Mammary epithelial cell (primary cell): ENCODE measurements at regions of chr14 and their contacts with region 1.

Region 1: DNA sequence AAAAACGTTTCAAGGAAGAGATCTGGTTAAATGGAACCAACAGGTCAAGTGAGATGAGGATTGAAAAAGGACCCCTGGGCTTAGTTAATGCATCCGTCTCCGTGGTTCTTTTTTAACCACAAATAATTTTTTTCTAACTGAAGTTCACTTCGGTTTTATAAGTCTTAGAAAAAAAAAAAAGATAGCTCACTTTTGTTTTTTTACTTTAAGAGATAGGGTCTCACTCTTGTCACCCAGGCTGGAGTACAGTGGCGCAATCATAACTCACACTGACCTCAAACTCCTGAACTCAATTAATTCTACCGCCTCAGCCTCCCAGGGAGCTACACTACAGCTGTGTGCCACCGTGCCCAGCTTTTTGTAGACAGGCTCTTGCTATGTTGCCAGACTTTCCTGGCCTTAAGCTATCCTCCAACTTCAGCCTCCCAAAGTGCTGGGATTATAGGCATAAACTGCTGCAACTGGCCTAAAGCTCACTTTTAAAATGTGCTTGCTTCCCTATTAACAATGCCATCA is 11.8 kb downstream of the HNRNPC start:
- DNase-seq: no peak
- H3K4me3 ChIP-seq: no peak overlapping the region
- H3K27ac ChIP-seq: no peak overlapping the region
- H3K4me1 ChIP-seq: peaks cover 20% of the 10 kb centered on the region
- H3K27me3 ChIP-seq: no peaks in the 10 kb centered on the region
- CTCF ChIP-seq: no peak

Region 2: DNA sequence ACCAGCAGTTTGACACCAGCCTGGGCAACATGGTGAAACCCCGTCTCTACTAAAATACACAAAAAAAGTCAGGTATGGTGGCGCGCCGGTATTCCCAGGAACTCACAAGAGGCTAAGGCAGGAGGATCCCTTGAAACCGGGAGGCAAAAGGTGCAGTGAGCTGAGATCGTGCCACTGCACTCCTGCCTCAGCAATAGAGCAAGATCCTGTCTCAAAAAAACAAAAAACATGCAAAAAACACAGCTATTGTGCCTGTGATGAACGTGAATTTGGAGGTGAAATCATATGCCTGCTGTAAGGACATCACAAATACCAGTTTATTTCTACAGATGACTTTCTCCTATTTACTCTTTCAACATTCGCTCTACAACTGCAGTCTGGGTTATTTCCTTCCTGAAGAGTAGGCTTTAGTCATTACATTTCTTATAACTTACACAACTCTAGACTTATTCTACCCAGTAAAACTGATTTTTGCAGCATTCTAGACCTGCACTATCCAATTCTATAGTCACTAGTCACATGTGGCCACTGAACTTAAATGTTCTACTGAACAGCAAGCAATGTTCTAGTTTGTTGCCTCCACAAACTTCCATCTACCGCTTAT is 36.5 kb before region 1 on chr14:
- CTCF ChIA-PET with region 1: no interaction called
- dilution Hi-C with region 1: no loop called
- in situ Hi-C with region 1: no loop called
- intact Hi-C with region 1: loop called (anchors 5 kb)
- DNase-seq: no peak
- H3K4me3 ChIP-seq: no peak overlapping the region
- H3K27ac ChIP-seq: no peak overlapping the region
- H3K4me1 ChIP-seq: peaks cover 23% of the 10 kb centered on the region
- H3K27me3 ChIP-seq: no peaks in the 10 kb centered on the region
- CTCF ChIP-seq: no peak

Region 3: GRCh38 chr14:21269252-21270046 is 12.0 kb after region 1 on chr14 and contains the start of gene HNRNPC:
- CTCF ChIA-PET with region 1: no interaction called
- dilution Hi-C with region 1: no loop called
- in situ Hi-C with region 1: no loop called
- intact Hi-C with region 1: no loop called
- DNase-seq: peak; percentile 100
- H3K4me3 ChIP-seq: peak within 1 kb of the TSS; percentile 73 to 99 (median 99)
- H3K27ac ChIP-seq: peak within 1 kb of the TSS; percentile 98
- H3K4me1 ChIP-seq: peaks cover 20% of the 10 kb centered on the region
- H3K27me3 ChIP-seq: no peaks in the 10 kb centered on the region
- CTCF ChIP-seq: no peak
- total RNA-seq, gene HNRNPC: 471 to 576 TPM

Region 4: DNA sequence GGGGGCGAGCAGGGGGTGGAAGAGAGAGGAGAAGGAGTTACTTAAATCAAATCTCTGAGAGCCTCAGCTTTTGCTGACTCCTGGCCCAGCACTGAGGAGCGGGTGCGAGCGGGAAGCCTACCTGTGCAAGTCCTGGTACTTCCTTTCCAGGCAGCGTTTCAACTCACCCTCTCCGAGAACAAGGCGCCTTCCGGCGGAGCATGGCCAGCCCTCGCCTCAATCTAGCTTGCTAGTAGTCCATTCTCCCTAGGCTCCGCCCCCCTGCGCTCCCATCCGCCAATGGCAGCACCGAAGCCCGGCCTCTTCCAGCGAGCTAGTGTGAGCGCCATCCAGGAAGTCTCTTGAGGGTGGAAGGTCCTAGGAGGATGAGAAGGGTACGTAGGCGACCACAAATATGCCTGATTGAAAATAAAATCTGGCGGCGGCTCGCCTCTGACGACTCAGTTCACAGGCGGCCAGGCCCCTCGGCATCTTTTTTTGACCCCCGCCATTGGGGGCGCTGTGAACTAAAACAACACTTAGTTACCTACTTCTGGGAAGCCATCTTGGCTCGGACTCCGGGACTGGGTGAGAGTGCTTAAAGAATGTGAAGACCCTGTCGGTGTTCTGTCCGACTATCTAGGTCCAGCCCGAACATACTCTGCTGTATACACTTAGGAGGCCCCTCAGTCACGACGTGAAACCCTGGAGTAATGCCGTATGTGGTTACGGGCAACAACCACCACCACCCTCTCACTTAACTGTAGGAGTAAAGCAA is 198.6 kb after region 1 on chr14 and contains the start of gene CHD8:
- CTCF ChIA-PET with region 1: no interaction called
- dilution Hi-C with region 1: no loop called
- in situ Hi-C with region 1: no loop called
- intact Hi-C with region 1: no loop called
- DNase-seq: peak; percentile 100
- H3K4me3 ChIP-seq: peak within 1 kb of the TSS; percentile 75 to 93 (median 93)
- H3K27ac ChIP-seq: peak within 1 kb of the TSS; percentile 87
- H3K4me1 ChIP-seq: peaks cover 12% of the 10 kb centered on the region
- H3K27me3 ChIP-seq: no peaks in the 10 kb centered on the region
- CTCF ChIP-seq: peak; percentile 45 to 69
- total RNA-seq, gene CHD8: 69.2 to 76.0 TPM